Activated CD4-positive, alpha-beta memory T cell treated with anti-CD3 and anti-CD28 coated beads, Interleukin-2, amount 10 ng/mL, durations not matched to agents 7 days and 5 days (primary cell): ENCODE measurements at regions of chr2 and their contacts with region 1.

Region 1: GRCh38 chr2:196926562-196927375 is at the start of gene PGAP1:
- DNase-seq: peak; percentile 89
- H3K4me3 Mint-ChIP-seq: peak within 1 kb of the TSS; percentile 93
- H3K27ac Mint-ChIP-seq: peak within 1 kb of the TSS; percentile 99
- H3K4me1 Mint-ChIP-seq: peaks cover 37% of the 10 kb centered on the region
- H3K27me3 Mint-ChIP-seq: no peaks in the 10 kb centered on the region
- total RNA-seq, gene PGAP1: 53.6 to 63.6 TPM

Region 2: GRCh38 chr2:196719110-196719872 is 207.5 kb before region 1 on chr2:
- CTCF ChIA-PET with region 1: no interaction called
- POLR2A ChIA-PET with region 1: no interaction called
- DNase-seq: no peak
- H3K4me3 Mint-ChIP-seq: no peak overlapping the region
- H3K27ac Mint-ChIP-seq: no peak overlapping the region
- H3K4me1 Mint-ChIP-seq: peaks cover 11% of the 10 kb centered on the region
- H3K27me3 Mint-ChIP-seq: no peaks in the 10 kb centered on the region

Region 3: DNA sequence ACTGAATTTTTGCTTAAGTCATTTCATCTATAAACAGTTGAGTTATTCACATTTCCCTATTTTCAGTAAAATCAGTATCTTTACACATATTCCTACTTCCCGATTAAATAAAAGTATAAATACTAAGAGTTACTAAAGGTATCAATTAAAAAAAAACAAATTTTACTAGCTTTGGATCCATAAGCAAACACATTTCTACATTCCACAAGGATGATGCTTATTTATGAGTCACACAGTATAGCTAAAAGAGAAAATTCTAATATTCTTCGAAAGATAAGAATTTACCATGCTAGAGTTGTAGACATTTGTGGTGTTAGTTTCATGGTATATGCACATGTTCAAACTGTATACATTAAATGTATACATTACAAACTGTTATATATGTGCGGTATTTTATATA is 23.9 kb before region 1 on chr2:
- CTCF ChIA-PET with region 1: no interaction called
- POLR2A ChIA-PET with region 1: interaction called, 20 read pairs
- DNase-seq: no peak
- H3K4me3 Mint-ChIP-seq: no peak overlapping the region
- H3K27ac Mint-ChIP-seq: no peak overlapping the region
- H3K4me1 Mint-ChIP-seq: peaks cover 9% of the 10 kb centered on the region
- H3K27me3 Mint-ChIP-seq: no peaks in the 10 kb centered on the region

Region 4: DNA sequence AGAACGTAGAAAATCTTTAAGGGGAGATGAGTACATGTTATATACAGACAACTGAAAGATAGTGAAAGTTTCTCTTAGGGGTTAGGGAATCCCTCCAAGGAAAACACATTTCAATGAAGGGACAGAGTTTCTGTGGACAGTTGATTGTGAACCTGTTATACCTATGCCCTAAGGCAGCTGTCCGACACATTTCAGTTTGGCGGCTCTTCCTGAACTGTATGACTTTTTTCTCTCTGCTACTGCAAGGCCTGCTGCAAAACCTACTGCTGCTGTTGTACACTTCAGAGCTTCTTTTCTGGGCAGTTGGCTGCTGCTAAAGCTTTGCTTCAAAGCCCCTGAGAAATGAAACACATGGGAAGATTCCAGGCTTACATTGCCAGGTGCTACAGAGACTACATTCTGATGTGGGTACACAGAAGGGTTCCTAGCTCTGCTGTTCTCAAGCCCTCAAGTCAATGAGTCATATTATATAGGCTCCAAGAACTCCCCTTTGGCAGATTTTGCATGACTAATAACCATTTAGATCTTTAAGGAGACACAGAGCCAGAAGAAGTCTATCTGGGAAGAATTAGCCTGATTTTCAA is 12.5 kb after region 1 on chr2:
- CTCF ChIA-PET with region 1: no interaction called
- POLR2A ChIA-PET with region 1: interaction called, 16 read pairs
- DNase-seq: no peak
- H3K4me3 Mint-ChIP-seq: no peak overlapping the region
- H3K27ac Mint-ChIP-seq: no peak overlapping the region
- H3K4me1 Mint-ChIP-seq: peaks cover 8% of the 10 kb centered on the region
- H3K27me3 Mint-ChIP-seq: no peaks in the 10 kb centered on the region

Region 5: DNA sequence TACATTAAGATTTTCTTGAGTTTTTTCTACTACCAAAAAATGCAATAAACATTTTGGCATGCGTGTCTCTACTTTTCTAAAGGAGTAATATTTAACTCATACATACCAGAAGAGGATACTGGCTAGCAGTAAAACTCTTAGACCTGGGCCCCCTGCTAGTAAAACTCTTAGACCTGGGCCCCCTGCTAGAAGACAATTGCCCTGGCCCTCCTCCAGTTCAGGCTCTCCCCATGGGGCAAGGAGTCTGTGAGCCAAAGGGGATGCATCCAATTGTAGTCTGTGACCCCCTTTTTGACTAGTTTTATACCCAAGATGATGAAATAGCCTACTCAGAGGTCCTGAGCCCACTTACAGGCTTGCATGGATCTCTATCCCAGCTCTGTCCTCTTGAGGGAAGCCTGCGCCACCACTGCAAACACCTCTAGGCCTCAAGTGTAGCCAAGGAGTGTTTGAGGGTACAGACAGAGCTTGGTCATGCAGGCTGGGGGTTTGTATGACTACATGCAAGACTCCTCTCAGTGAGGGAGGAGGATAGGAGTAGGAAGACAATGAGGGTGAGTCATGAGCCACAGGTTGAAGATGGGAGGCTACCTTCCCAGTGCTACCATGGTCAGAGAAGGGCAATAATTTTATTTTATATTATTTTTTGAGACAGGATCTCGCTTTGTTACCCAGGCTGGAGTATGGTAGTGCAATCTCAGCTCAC is 45.0 kb after region 1 on chr2:
- CTCF ChIA-PET with region 1: interaction called, 3 read pairs
- POLR2A ChIA-PET with region 1: interaction called, 15 read pairs
- DNase-seq: no peak
- H3K4me3 Mint-ChIP-seq: no peak overlapping the region
- H3K27ac Mint-ChIP-seq: no peak overlapping the region
- H3K4me1 Mint-ChIP-seq: peaks cover 34% of the 10 kb centered on the region
- H3K27me3 Mint-ChIP-seq: no peaks in the 10 kb centered on the region

Region 6: DNA sequence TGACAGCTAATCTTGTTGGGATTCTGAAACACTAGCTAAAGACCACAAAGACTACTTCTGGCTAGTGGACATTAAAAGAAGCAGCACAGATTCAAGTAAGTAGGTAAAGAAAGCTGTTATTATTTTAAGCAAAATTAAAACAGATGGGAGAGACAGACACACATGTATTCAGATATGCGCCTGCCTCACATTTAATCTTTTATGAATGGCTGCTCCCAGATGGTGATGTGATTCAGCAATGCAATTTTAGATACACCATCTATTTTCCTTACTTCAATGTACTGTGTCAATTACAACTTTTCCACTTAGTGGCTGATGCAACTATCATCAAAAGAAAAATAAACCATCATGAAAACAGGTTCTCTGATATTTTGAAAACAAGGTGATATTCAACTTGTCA is 132.7 kb after region 1 on chr2:
- CTCF ChIA-PET with region 1: no interaction called
- POLR2A ChIA-PET with region 1: no interaction called
- DNase-seq: no peak
- H3K4me3 Mint-ChIP-seq: no peak overlapping the region
- H3K27ac Mint-ChIP-seq: no peak overlapping the region
- H3K4me1 Mint-ChIP-seq: peaks cover 30% of the 10 kb centered on the region
- H3K27me3 Mint-ChIP-seq: no peaks in the 10 kb centered on the region

Region 7: GRCh38 chr2:197434541-197435513 is 508.1 kb after region 1 on chr2 and contains the start of gene SF3B1:
- CTCF ChIA-PET with region 1: no interaction called
- POLR2A ChIA-PET with region 1: interaction called, 11 read pairs
- DNase-seq: peak; percentile 99
- H3K4me3 Mint-ChIP-seq: peak within 1 kb of the TSS; percentile 84
- H3K27ac Mint-ChIP-seq: peak within 1 kb of the TSS; percentile 100
- H3K4me1 Mint-ChIP-seq: peaks cover 50% of the 10 kb centered on the region
- H3K27me3 Mint-ChIP-seq: no peaks in the 10 kb centered on the region
- total RNA-seq, gene SF3B1: 292 to 304 TPM